MCF 10A (cell line): ENCODE measurements at regions of chr19 and their contacts with region 1.

Region 1: GRCh38 chr19:52139252-52140031 is at the start of gene ZNF616:
- DNase-seq: peak; percentile 96
- H3K4me3 Mint-ChIP-seq: peak within 1 kb of the TSS; percentile 95
- H3K27ac Mint-ChIP-seq: peak within 1 kb of the TSS; percentile 82
- H3K4me1 Mint-ChIP-seq: peaks cover 11% of the 10 kb centered on the region
- H3K27me3 Mint-ChIP-seq: no peaks in the 10 kb centered on the region
- CTCF ChIP-seq: peak; percentile 60
- total RNA-seq, gene ZNF616: 9.5 and 13.5 TPM in 2 replicates

Region 2: GRCh38 chr19:51986309-51987291 is 152.8 kb before region 1 on chr19 and contains the start of gene ZNF350:
- CTCF ChIA-PET with region 1: no interaction called
- POLR2A ChIA-PET with region 1: no interaction called
- intact Hi-C with region 1: loop called (anchors 1 kb)
- DNase-seq: peak; percentile 94
- H3K4me3 Mint-ChIP-seq: peak within 1 kb of the TSS; percentile 88
- H3K27ac Mint-ChIP-seq: peak within 1 kb of the TSS; percentile 96
- H3K4me1 Mint-ChIP-seq: no peaks in the 10 kb centered on the region
- H3K27me3 Mint-ChIP-seq: no peaks in the 10 kb centered on the region
- CTCF ChIP-seq: no peak
- total RNA-seq, gene ZNF350: 7.0 and 8.9 TPM in 2 replicates

Region 3: GRCh38 chr19:52095172-52096014 is 44.0 kb before region 1 on chr19 and contains the start of gene ZNF841:
- CTCF ChIA-PET with region 1: no interaction called
- POLR2A ChIA-PET with region 1: interaction called, 26 read pairs
- intact Hi-C with region 1: no loop called
- DNase-seq: peak; percentile 96
- H3K4me3 Mint-ChIP-seq: peak within 1 kb of the TSS; percentile 92
- H3K27ac Mint-ChIP-seq: peak within 1 kb of the TSS; percentile 93
- H3K4me1 Mint-ChIP-seq: peaks cover 25% of the 10 kb centered on the region
- H3K27me3 Mint-ChIP-seq: no peaks in the 10 kb centered on the region
- CTCF ChIP-seq: no peak
- total RNA-seq, gene ZNF841: 40.9 and 49.8 TPM in 2 replicates

Region 4: DNA sequence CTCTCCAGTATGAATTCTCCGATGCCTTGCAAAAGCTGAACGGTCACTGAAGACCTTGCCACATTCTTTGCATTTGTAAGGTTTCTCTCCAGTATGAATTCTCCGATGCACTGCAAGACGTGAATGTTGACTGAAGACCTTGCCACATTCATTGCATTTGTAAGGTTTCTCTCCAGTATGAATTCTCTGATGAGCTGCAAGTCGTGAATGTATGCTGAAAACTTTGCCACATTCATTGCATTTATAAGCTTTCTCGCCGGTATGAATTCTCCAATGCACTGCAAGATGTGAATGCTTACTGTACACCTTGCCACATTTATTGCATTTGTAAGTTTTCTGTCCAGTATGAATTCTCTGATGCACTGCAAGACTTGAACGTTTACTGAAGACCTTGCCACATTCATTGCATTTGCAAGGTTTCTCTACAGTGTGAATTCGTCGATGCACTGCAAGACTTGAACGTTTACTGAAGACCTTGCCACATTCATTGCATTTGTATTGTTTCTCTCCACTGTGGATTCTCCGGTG is 23.9 kb before region 1 on chr19:
- CTCF ChIA-PET with region 1: no interaction called
- POLR2A ChIA-PET with region 1: no interaction called
- intact Hi-C with region 1: no loop called
- DNase-seq: no peak
- H3K4me3 Mint-ChIP-seq: no peak overlapping the region
- H3K27ac Mint-ChIP-seq: no peak overlapping the region
- H3K4me1 Mint-ChIP-seq: no peaks in the 10 kb centered on the region
- H3K27me3 Mint-ChIP-seq: no peaks in the 10 kb centered on the region
- CTCF ChIP-seq: no peak

Region 5: DNA sequence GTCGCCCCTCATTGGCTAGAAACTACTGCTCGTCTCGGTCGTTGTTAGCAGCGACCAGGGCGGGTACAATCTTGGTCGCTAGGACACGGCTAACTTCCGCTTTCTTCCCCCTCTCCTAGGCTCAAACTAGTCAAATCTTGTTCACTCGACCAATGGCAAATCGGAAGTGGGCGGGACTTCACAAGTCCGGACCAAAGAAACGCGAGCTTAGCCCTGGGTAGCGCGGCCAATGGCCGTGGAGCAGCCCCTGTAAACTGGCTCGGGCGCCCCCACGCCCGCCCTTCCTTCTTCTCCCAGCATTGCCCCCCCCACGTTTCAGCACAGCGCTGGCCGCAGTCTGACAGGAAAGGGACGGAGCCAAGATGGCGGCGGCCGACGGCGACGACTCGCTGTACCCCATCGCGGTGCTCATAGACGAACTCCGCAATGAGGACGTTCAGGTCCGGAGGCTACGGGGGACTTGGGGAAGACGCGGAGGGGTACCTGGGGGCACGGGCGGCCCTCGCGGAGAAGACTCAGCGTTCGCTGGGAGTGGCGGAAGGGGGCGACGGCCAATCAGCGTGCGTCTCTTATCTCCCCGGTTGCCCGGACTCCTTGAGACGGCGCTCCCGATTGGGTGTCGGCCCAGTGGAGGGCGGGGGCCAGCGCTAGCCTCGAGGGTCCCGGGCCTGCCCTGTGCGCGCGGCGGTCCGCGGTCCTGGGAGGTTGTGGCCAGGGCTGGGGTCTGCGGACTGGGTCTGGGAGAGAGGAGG is 50.5 kb after region 1 on chr19 and contains the start of gene PPP2R1A:
- CTCF ChIA-PET with region 1: interaction called, 8 read pairs
- POLR2A ChIA-PET with region 1: interaction called, 60 read pairs
- intact Hi-C with region 1: loop called (anchors 1 kb)
- DNase-seq: peak; percentile 100
- H3K4me3 Mint-ChIP-seq: peak within 1 kb of the TSS; percentile 97
- H3K27ac Mint-ChIP-seq: peak within 1 kb of the TSS; percentile 100
- H3K4me1 Mint-ChIP-seq: peaks cover 27% of the 10 kb centered on the region
- H3K27me3 Mint-ChIP-seq: no peaks in the 10 kb centered on the region
- CTCF ChIP-seq: no peak
- total RNA-seq, gene PPP2R1A: 194 and 211 TPM in 2 replicates

Region 6: DNA sequence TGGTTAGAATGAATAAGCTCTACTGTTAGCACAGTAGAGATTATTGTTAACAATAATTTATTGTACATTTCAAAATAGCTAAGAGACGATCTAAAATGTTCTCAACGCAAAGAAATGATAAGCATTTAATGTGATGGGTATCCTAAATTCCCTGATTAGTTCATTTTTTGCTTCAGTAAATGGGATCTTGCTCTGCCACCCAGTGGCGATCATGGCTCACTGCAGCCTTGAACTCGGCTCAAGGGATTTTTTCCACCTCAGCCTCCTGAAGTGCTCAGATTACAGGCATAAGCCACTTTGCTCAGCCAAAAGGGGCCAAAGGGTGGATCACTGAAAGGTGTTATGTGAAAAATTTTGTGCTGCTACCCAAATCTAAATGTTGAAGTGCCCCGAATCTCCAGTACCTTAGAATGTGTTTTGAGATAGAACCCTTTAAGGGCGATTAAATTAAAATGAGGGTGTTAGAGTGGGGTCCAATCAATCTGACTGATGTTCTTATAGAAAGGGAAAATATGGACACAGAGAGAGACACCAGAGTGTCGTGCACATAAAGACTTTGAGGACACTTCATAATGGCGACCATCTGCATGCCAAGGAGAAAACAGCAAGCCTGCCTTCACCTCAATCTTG is 98.4 kb after region 1 on chr19:
- CTCF ChIA-PET with region 1: interaction called, 23 read pairs
- POLR2A ChIA-PET with region 1: interaction called, 11 read pairs
- intact Hi-C with region 1: loop called (anchors 1 kb)
- DNase-seq: peak; percentile 68
- H3K4me3 Mint-ChIP-seq: no peak overlapping the region
- H3K27ac Mint-ChIP-seq: no peak overlapping the region
- H3K4me1 Mint-ChIP-seq: no peaks in the 10 kb centered on the region
- H3K27me3 Mint-ChIP-seq: no peaks in the 10 kb centered on the region
- CTCF ChIP-seq: peak; percentile 72

Region 7: DNA sequence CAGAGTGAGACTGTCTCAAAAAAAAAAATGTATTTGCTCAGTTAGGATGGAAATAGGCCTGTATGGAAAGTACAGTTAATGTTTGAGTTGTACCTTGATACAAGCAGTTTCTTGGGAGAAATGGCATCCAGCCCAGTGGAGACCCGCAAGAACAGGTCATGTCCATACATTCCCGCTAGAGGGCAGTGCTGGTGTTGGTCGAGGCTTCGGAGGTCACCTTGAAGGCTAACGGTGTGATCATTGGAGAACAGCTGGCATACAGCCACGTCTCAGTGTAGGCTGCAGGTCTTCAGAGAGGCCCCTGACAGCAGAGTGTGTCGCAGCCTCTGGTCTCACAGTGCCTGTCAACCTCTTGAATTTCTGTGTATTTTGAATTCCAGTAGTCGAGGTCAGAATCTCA is 204.1 kb after region 1 on chr19:
- CTCF ChIA-PET with region 1: no interaction called
- POLR2A ChIA-PET with region 1: no interaction called
- intact Hi-C with region 1: no loop called
- DNase-seq: peak; percentile 22
- H3K4me3 Mint-ChIP-seq: no peak overlapping the region
- H3K27ac Mint-ChIP-seq: no peak overlapping the region
- H3K4me1 Mint-ChIP-seq: no peaks in the 10 kb centered on the region
- H3K27me3 Mint-ChIP-seq: no peaks in the 10 kb centered on the region
- CTCF ChIP-seq: no peak